ENCODE measurements at regions of chr11 and their contacts with region 1.

Region 1: GRCh38 chr11:120303004-120303637 is 22.0 kb upstream of the TLCD5 start:
- DNase-seq: no peak
- H3K4me3 ChIP-seq: no peak overlapping the region
- H3K27me3 ChIP-seq: peaks cover 7% of the 10 kb centered on the region
- CTCF ChIP-seq: peak; percentile 96

Region 2: DNA sequence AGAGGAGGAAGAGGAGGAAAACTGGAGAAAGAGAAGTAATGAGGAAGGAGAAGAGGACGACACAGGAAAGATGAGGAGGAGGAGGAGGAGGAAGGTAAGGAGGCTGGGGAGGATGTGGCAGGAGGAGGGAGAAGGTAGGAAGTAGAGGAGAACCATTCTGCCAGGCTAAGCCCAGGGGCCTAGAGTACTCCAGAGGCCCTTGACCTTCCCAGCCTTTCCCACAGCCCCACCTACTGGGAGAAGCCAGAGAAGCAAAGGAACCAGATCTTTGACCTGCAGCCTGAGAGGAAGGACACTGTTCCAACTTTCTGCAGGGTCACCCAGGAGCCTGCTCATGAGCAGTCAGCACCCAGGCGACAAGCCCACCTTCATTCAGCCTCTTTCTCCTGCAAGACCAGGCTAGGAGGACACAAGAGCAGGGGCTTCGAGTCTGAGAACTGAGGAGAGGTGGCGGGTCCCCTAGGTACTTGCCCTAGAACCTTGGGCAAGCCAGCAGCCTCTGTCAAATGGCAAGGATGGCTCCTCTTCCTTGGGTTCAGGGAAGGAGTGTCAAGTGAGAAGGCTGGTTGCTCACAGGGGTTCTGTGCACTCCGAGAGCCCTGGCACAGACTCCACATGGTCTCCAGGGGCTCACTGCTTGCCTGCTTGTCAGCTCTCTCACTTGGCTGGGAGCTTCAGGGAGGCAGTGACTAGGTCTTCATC is 120.2 kb before region 1 on chr11:
- CTCF ChIA-PET with region 1: interaction called, 71 read pairs
- POLR2A ChIA-PET with region 1: no interaction called
- DNase-seq: no peak
- H3K4me3 ChIP-seq: no peak overlapping the region
- H3K27me3 ChIP-seq: peaks cover 2% of the 10 kb centered on the region
- CTCF ChIP-seq: peak; percentile 44; the same call in 1 of the 2 replicates

Region 3: DNA sequence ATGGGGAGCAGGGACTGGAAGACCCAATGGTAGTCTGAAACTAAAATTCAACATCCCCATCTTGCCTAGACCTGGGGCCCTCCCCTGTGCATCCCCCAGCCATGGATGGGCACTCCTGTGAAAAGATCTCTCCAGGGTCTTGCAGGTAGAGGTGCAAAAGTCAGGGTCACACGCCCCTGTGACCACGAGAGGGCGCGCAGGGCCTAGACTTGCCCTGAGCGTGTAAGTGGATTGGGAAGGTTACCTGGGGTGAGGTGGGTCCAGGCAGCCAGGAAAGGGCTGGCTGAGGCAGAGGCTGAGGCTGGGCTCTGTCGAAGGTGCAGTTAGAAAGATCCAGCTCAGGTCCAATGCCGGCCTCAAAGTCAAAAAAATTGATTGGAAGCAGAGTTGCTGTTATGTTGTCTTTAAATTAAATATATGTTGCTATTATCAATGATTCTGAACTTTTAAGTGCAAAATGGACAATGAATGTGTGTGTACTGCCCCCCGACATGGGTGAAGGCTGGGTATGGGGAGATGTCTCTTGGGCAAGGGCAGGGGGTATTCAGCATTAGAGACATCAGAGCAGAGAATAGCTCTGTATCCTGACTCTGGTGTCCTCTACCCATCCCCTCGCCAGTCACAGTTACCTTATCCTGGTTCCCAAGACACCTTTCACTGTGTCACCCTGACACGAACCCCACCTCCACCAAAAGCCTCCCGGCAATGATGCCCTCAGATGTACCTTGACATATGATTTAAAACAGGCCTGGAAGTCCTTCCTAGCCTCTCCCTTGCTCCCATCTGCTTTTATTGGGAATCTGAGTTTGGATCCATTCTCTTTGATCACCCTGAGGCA is 67.9 kb before region 1 on chr11:
- CTCF ChIA-PET with region 1: interaction called, 219 read pairs
- POLR2A ChIA-PET with region 1: no interaction called
- DNase-seq: no peak
- H3K4me3 ChIP-seq: no peak overlapping the region
- H3K27me3 ChIP-seq: peaks cover 36% of the 10 kb centered on the region
- CTCF ChIP-seq: peak; percentile 80

Region 4: GRCh38 chr11:120285256-120285655 is 17.9 kb before region 1 on chr11:
- CTCF ChIA-PET with region 1: interaction called, 58 read pairs
- POLR2A ChIA-PET with region 1: no interaction called
- DNase-seq: no peak
- H3K4me3 ChIP-seq: no peak overlapping the region
- H3K27me3 ChIP-seq: peaks cover 4% of the 10 kb centered on the region
- CTCF ChIP-seq: no peak

Region 5: GRCh38 chr11:120324932-120325810 is 22.1 kb after region 1 on chr11 and contains the start of gene TLCD5:
- CTCF ChIA-PET with region 1: interaction called, 15 read pairs
- POLR2A ChIA-PET with region 1: no interaction called
- DNase-seq: no peak
- H3K4me3 ChIP-seq: peak within 1 kb of the TSS; percentile 62
- H3K27me3 ChIP-seq: no peaks in the 10 kb centered on the region
- CTCF ChIP-seq: peak; percentile 33; the same call in 1 of the 2 replicates
- polyA plus RNA-seq, gene TLCD5: 8.0 and 9.8 TPM in 2 replicates

Region 6: GRCh38 chr11:120343429-120343828 is 40.3 kb after region 1 on chr11:
- CTCF ChIA-PET with region 1: no interaction called
- POLR2A ChIA-PET with region 1: no interaction called
- DNase-seq: no peak
- H3K4me3 ChIP-seq: no peak overlapping the region
- H3K27me3 ChIP-seq: no peaks in the 10 kb centered on the region
- CTCF ChIP-seq: no peak